Left cardiac atrium (tissue), 4 donors: ENCODE measurements at regions of chr11 and their contacts with region 1.

Region 1: DNA sequence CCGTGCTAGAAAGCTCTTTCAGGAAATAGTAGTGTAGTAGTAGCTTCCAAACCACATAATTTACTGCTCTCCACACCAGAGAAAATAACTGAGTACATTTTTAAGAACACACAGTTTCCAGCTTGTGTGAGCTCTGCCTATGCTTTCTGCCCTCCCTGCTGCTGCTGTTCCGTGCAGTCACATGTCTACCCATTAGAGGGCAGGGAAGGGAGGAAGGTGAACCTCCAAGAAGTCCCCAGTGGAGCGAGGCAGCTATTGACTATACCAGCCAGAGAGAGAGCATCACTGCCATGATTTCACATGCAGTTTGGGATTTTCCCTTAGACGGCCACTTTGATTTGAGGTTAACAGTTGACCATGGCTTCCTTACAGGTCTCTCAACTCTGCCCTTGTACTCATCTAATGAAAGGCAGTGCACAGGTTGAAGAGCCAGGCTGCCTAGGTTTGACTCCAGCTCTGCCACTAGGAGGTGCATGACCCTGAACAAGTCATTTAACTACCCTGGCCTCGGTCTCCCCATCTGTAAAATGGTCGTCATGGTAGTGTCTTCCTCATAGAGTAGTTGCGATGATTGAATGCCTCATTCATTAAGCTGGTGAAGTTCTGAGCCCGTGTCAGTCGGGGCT is 19.7 kb upstream of the CTTN start:
- DNase-seq: no peak
- ATAC-seq: no peak

Region 2: GRCh38 chr11:69985641-69986439 is 392.8 kb before region 1 on chr11:
- intact Hi-C with region 1: no loop called
- DNase-seq: no peak
- ATAC-seq: peak; percentile 27 to 39

Region 3: DNA sequence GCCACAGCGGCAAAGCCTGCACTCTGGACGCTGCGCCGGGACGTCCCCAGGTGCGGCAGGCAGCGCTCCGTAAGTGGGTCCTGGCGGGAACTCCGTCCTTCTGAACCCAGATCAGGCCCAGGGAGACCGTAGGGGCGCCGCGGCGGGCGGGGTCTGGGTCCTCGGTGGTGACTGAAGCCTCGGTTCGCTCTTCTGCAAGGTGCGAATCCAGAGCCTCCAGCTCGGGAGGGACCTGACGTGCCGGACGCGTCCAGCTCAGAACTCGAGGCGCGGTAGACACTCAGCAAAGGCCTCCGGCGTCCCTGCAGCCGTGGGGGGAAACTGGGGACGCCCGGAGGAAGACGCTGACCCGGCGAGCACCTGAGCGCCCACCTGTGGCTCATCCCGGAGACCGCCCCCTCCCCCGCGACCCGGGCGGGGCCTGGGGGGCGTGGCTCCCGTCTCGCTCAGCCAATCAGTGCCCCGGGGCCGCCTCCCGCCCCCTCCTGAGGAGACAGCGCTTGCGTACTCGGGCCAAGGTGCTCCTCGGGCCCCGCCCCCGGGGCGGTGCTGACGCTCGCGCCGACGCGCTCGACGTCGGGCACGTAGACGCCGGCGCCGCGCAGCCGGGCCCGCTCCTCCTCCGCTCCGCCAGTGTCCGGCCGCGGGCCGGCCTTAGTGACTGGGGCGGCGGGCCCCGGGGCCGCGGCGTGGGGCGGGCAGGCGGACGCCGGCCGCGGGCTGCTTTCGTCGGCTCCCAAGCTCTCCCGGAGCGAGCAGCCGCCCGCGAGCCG is 108.3 kb before region 1 on chr11 and contains the start of gene PPFIA1:
- intact Hi-C with region 1: loop called in 1 of 2 experiments (anchors 10 kb)
- DNase-seq: peak; percentile 96
- ATAC-seq: peak; percentile 99
- total RNA-seq, gene PPFIA1: 32.0 to 39.8 TPM

Region 4: DNA sequence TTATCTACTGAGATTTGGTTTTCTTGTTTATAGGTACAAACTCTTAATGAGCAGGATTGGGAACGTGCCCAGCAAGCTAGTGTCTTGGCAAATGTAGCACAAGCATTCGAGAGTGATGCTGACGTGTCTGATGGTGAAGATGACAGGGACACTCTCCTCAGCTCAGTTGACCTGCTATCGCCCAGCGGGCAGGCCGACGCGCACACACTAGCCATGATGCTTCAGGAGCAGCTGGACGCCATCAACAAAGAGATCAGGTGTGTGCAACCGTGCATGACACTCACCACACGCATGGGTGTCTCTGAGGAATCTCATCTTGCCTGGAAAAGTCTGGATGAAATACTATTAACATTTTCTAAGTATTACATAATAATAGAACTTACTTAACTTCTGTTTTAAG is 35.0 kb before region 1 on chr11:
- intact Hi-C with region 1: no loop called
- DNase-seq: no peak
- ATAC-seq: peak; percentile 54 to 78

Region 5: DNA sequence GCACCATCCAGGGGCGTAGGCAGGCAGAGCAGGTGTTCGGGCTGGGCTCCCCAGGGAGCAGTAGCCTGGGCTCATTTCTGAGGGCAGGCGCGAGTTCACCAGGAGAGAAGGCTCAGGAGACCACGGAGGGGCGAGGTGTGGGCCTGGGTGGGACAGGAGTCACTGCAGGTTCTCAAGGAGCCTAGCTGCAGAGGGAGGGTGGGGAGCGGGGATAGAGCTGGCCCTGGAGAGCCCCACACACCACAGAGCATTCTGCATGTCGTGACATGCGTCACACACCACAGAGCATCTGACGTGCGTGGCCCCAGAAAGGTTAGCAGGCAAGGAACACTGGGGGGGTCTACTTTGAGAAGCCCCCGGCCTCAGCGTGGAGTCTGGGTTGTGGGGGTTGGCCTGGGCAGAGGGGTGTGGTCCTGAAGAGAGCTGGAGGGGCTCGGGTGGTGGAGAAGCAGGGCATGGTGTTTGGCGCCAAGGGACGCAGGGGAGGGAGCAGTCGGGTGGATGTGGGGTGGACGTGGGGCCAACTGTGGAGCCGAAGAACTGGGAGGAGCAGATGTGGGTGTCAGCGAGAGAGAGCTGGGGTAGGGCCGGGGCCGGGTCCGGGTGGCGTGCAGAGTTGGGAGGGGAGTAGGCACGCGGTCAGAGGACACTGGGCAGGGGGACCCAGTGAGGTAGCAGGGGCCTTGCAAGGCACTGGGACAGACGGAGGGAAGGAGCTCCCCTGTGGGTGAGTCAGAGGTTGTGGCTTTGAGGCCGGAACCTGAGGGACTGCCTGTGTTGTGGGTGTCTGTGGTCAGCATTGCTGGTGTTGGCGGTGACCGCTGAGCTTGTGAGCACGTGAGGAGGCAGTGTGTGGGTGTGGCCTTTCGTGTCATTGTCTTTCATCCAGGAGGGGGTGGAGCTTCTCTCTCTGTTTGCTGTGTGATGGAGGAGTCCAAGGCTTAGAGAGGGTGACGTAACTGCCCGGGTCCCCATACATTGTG is 45.2 kb after region 1 on chr11:
- intact Hi-C with region 1: no loop called
- DNase-seq: no peak
- ATAC-seq: peak in 1 of 2 donors; percentile 9